Natural killer cell (primary cell): ENCODE measurements at regions of chr3 and their contacts with region 1.

Region 1: DNA sequence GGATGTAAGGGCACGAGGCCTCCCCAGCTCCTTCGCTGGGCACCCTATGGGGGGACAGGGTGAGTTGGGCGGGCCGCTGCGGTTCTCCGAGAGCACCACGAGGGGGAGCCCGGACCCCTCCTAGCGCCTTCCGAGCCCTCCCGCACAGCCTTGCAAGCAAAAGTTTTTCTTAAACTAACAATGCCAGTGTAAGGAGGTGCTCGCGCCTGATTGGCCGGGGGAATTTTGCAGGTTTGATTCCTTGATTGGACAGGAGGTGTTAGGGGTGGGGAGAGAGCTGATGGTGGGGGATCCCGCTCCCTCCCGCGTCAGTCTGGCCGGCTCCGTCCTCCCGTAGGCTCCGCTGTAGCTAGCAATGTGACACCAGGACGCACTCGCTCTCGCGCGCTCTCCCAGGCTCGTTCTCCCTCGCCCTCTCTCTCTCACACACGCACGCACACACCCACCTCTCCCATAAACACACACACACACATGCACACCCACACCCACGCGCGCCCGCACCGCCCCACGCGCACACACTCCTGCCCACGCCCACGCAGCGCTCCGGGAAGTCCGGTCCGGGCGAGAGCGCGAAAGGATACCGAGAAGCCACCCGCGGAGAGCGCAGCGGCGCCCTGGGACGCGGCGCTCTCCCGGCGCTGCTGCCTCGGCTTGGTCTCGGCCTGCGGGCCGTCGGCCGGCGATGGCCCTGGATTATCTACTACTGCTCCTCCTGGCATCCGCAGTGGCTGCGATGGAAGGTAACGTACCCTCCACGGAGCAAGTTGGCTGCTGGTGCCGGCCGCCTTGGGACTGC is at the start of gene EPHB1:
- DNase-seq: peak in 1 of 2 donors; percentile 51
- ATAC-seq: peak; percentile 26 to 84 (median 42)
- H3K4me3 ChIP-seq: peak within 1 kb of the TSS; percentile 28
- H3K4me3 Mint-ChIP-seq: peak within 1 kb of the TSS; percentile 85
- H3K27ac ChIP-seq: no peak within 1 kb of the TSS
- H3K27ac Mint-ChIP-seq: no peak within 1 kb of the TSS
- H3K4me1 ChIP-seq: peaks cover 5% of the 10 kb centered on the region
- H3K4me1 Mint-ChIP-seq: peaks cover 11% of the 10 kb centered on the region in 2 donors
- H3K27me3 ChIP-seq: peaks cover 6% of the 10 kb centered on the region
- H3K27me3 Mint-ChIP-seq: peaks cover 33 to 35% of the 10 kb centered on the region in 2 donors
- CTCF ChIP-seq: peak; percentile 26
- total RNA-seq, gene EPHB1: 0.60 TPM in 1 of 3 donors, not detected in the others

Region 2: GRCh38 chr3:134718726-134719125 is 76.4 kb before region 1 on chr3:
- intact Hi-C with region 1: no loop called
- DNase-seq: no peak
- ATAC-seq: no peak
- H3K4me3 ChIP-seq: no peak overlapping the region
- H3K4me3 Mint-ChIP-seq: no peak overlapping the region
- H3K27ac ChIP-seq: no peak overlapping the region
- H3K27ac Mint-ChIP-seq: no peak overlapping the region
- H3K4me1 ChIP-seq: no peaks in the 10 kb centered on the region
- H3K4me1 Mint-ChIP-seq: no peaks in the 10 kb centered on the region
- H3K27me3 ChIP-seq: no peaks in the 10 kb centered on the region
- H3K27me3 Mint-ChIP-seq: peaks cover 5 to 12% of the 10 kb centered on the region in 2 donors
- CTCF ChIP-seq: no peak

Region 3: GRCh38 chr3:135895106-135895733 is 1100.1 kb after region 1 on chr3:
- intact Hi-C with region 1: loop called (anchors 10 kb)
- DNase-seq: peak in 1 of 2 donors; percentile 42
- ATAC-seq: no peak
- H3K4me3 ChIP-seq: no peak overlapping the region
- H3K4me3 Mint-ChIP-seq: no peak overlapping the region
- H3K27ac ChIP-seq: no peak overlapping the region
- H3K27ac Mint-ChIP-seq: no peak overlapping the region
- H3K4me1 ChIP-seq: no peaks in the 10 kb centered on the region
- H3K4me1 Mint-ChIP-seq: no peaks in the 10 kb centered on the region
- H3K27me3 ChIP-seq: no peaks in the 10 kb centered on the region
- H3K27me3 Mint-ChIP-seq: peaks cover 5% of the 10 kb centered on the region in 2 donors
- CTCF ChIP-seq: peak; percentile 36